ENCODE measurements at regions of chr13 and their contacts with region 1.

Region 1: GRCh38 chr13:99656092-99656745 is 154.9 kb downstream of the TM9SF2 start:
- DNase-seq: peak; percentile 77 to 83
- ATAC-seq: peak; percentile 85
- H3K4me3 ChIP-seq: no peak overlapping the region
- H3K27ac ChIP-seq: no peak overlapping the region
- H3K4me1 ChIP-seq: no peaks in the 10 kb centered on the region
- H3K27me3 ChIP-seq: no peaks in the 10 kb centered on the region

Region 2: GRCh38 chr13:99617474-99618255 is 38.6 kb before region 1 on chr13:
- intact Hi-C with region 1: loop called (anchors 5 kb)
- DNase-seq: peak; percentile 59 to 84
- ATAC-seq: peak; percentile 84
- H3K4me3 ChIP-seq: no peak overlapping the region
- H3K27ac ChIP-seq: no peak overlapping the region
- H3K4me1 ChIP-seq: no peaks in the 10 kb centered on the region
- H3K27me3 ChIP-seq: no peaks in the 10 kb centered on the region

Region 3: DNA sequence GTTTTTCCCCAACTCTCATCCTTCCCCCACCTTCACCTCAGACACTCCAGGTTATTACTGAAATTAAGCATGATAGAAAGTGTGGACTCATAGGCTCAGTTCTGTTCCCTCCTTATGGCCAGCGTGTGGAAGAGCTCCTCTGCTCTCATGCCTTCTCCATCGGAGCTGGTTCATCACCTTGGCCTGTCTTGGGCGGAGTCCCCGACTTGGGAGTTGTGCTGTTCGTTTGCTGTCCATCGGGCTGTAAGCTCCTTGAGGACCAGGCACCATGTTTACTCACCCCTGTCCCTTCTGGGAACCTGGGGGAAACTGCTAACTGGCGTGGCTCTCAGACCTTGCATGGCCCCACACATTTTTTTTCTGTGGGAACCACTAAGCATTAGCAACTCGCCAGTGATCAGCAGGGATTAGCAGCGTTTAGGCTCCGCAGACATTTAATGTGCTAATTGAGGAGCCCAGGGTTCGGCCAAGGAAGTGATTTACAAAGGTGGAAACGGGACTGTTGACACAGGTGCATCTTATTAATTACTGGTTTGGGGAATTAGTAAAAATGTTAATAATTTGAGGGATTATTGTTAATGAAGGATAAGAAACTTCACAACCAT is 31.2 kb before region 1 on chr13:
- intact Hi-C with region 1: loop called in 1 of 2 experiments (anchors 5 kb)
- DNase-seq: no peak
- ATAC-seq: no peak
- H3K4me3 ChIP-seq: no peak overlapping the region
- H3K27ac ChIP-seq: no peak overlapping the region
- H3K4me1 ChIP-seq: peaks cover 10% of the 10 kb centered on the region in 2 donors
- H3K27me3 ChIP-seq: no peaks in the 10 kb centered on the region

Region 4: DNA sequence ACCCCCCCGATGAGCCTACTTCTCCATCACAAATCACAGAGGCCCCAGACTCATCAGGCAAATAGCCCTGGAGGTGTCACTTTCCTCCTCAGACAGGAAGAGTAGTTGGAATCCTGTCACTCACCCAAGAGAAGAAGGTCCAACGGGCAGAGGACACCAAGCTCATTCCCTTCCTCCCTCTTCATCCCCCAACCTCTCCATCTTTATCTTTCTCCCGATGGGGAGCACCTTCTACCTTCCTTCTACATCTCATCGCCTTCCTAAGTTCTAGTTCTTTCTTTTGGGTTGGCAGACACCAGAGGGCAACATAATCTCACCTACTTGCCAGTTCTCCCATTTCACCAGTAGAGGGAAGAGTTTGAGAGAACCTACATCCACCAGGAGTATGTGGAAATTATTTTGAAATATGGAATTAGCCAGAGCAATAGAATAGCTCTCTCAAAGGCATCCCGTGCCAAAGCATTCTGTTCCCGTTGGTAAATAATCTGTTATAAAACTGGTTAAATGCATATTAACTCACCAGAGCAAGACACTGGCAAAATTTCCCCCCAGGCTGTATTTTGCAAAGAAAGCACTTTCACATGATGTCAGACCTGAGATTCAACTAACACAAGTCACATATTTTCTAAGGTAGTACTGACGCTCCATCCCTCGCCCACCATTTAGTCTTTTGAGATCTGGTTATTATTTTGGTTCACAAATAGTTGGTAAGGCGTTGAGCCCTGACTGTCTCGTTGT is 260.3 kb after region 1 on chr13:
- intact Hi-C with region 1: loop called in 1 of 2 experiments (anchors 10 kb)
- DNase-seq: no peak
- ATAC-seq: peak; percentile 82
- H3K4me3 ChIP-seq: no peak overlapping the region
- H3K27ac ChIP-seq: no peak overlapping the region
- H3K4me1 ChIP-seq: no peaks in the 10 kb centered on the region
- H3K27me3 ChIP-seq: no peaks in the 10 kb centered on the region

Region 5: DNA sequence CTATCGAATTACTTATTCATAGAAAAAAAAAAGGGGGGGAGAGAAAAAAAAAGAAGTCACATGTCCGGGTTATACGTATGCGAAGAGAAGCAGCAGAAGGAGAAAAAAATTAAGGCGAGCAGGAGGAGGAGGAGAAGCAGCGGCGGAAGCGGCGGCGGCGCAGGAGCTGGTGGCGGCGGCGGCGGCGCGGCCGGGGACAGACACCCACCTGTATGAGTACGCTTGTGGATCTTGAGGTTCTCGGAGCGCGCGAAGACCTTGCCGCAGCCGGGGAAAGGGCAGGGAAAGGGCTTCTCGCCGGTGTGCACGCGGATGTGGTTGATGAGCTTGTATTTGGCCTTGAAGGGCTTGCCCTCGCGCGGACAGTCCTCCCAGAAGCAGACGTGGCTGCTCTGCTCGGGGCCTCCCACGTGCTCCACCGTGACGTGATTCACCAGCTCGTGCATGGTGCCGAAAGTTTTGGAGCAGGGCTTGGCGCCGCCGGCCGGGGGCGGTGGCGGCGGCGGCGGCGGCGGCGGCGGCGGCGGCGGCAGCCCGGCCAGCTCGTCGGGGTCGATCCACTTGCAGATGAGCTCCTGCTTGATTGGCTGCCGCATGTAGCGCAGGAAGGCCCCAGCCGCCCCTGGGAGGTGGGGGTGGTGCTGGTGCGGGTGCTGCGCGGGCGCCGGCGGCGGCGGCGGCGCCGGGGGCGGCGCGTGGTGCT is 313.9 kb after region 1 on chr13:
- intact Hi-C with region 1: loop called in 1 of 2 experiments (anchors 10 kb)
- DNase-seq: peak in 1 of 2 donors; percentile 87
- ATAC-seq: no peak
- H3K4me3 ChIP-seq: peak overlapping the region; percentile 41 to 53
- H3K27ac ChIP-seq: no peak overlapping the region
- H3K4me1 ChIP-seq: no peaks in the 10 kb centered on the region
- H3K27me3 ChIP-seq: no peaks in the 10 kb centered on the region

Region 6: GRCh38 chr13:100235311-100235901 is 579.2 kb after region 1 on chr13:
- intact Hi-C with region 1: loop called (anchors 5 kb)
- DNase-seq: no peak
- ATAC-seq: no peak
- H3K4me3 ChIP-seq: no peak overlapping the region
- H3K27ac ChIP-seq: no peak overlapping the region
- H3K4me1 ChIP-seq: no peaks in the 10 kb centered on the region
- H3K27me3 ChIP-seq: no peaks in the 10 kb centered on the region

Region 7: GRCh38 chr13:100514788-100515409 is 858.7 kb after region 1 on chr13:
- intact Hi-C with region 1: loop called (anchors 2 kb)
- DNase-seq: peak; percentile 81 to 91
- ATAC-seq: peak; percentile 94
- H3K4me3 ChIP-seq: no peak overlapping the region
- H3K27ac ChIP-seq: no peak overlapping the region
- H3K4me1 ChIP-seq: no peaks in the 10 kb centered on the region
- H3K27me3 ChIP-seq: no peaks in the 10 kb centered on the region

Region 8: GRCh38 chr13:100689191-100689590 is 1033.0 kb after region 1 on chr13:
- intact Hi-C with region 1: no loop called
- DNase-seq: no peak
- ATAC-seq: no peak
- H3K4me3 ChIP-seq: no peak overlapping the region
- H3K27ac ChIP-seq: no peak overlapping the region
- H3K4me1 ChIP-seq: no peaks in the 10 kb centered on the region
- H3K27me3 ChIP-seq: no peaks in the 10 kb centered on the region

Measured in aorta (tissue), 5 donors.